HepG2 (cell line): ENCODE measurements at regions of chr7 and their contacts with region 1.

Region 1: DNA sequence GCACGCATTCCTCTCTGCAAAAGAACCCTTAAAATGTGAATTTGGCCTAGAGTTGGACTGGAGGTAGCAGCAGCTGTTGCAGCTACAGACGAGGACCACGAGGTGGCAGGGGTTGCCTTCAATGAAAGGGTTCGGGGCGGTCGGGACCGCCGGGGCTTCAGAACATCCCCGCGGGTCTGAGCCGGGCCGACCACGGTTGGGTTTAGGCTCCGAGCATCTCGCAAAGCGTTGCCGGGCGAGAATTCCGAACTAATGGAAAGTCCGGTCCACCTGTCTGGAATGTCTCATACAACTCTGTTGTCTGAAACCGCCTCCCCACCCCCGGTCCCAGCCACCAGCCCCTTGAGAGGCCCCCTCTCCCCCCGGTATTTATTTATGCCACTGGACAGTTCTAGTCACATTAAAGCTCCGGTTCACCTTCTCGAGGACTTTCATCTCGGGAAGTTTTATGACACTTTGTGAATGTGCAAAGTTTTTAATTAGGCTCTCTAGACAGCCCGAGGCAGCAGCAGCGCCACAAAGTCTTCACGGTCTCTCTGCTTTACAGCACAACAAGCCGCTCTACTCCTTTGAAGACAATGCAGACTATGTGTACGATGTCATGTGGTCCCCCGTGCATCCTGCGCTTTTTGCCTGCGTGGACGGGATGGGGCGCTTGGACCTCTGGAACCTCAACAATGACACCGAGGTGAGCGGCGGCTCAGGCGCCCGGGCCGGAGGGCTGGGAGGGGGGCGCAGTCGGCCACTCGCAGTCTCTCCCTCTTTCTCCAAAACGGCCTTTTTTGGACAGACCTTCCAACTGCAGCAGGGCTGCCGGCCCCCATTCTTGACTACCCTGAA is 246.2 kb downstream of the SLC25A13 start:
- DNase-seq: peak; percentile 55
- ATAC-seq: peak; percentile 99
- H3K4me3 ChIP-seq: peak overlapping the region; percentile 53 to 56 (median 56)
- H3K27ac ChIP-seq: no peak overlapping the region
- H3K4me1 ChIP-seq: peaks cover 7% of the 10 kb centered on the region
- H3K27me3 ChIP-seq: peaks cover 3 to 14% of the 10 kb centered on the region in 2 experiments; a peak in 3 of 5 replicates
- CTCF ChIP-seq: peak; percentile 91
- EP300 ChIP-seq: no peak
- POLR2A ChIP-seq: no peak
- RAD21 ChIP-seq: peak; percentile 90

Region 2: GRCh38 chr7:96093435-96093834 is 17.7 kb after region 1 on chr7:
- CTCF ChIA-PET with region 1: no interaction called
- POLR2A ChIA-PET with region 1: no interaction called
- in situ Hi-C with region 1: no loop called
- intact Hi-C with region 1: no loop called
- DNase-seq: no peak
- ATAC-seq: no peak
- H3K4me3 ChIP-seq: no peak overlapping the region
- H3K27ac ChIP-seq: no peak overlapping the region
- H3K4me1 ChIP-seq: no peaks in the 10 kb centered on the region
- H3K27me3 ChIP-seq: no peaks in the 10 kb centered on the region
- CTCF ChIP-seq: no peak
- EP300 ChIP-seq: no peak
- POLR2A ChIP-seq: no peak
- RAD21 ChIP-seq: no peak

Region 3: GRCh38 chr7:96143495-96144259 is 67.9 kb after region 1 on chr7:
- CTCF ChIA-PET with region 1: no interaction called
- POLR2A ChIA-PET with region 1: no interaction called
- in situ Hi-C with region 1: no loop called
- intact Hi-C with region 1: no loop called
- DNase-seq: no peak
- ATAC-seq: no peak
- H3K4me3 ChIP-seq: no peak overlapping the region
- H3K27ac ChIP-seq: no peak overlapping the region
- H3K4me1 ChIP-seq: no peaks in the 10 kb centered on the region
- H3K27me3 ChIP-seq: no peaks in the 10 kb centered on the region
- CTCF ChIP-seq: no peak
- EP300 ChIP-seq: no peak
- POLR2A ChIP-seq: no peak
- RAD21 ChIP-seq: no peak

Region 4: DNA sequence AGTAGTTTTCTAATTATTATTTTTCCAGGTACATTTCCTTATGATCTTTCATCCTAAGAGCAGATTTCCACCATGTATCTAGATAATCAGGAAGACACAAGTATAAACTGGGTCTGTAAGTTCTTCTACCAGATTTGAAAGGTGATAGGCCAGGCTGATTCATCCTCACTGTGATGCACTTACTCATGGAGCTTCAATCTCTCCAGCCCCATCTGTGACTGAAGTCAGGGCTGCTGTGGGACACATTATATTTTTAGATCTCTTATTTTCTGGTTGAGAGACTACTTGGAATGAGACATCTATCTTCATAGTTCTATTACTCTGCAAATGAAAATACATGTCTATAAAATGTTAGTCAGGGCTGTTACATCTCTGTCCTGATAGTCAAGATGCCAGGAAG is 331.7 kb after region 1 on chr7:
- CTCF ChIA-PET with region 1: no interaction called
- POLR2A ChIA-PET with region 1: no interaction called
- in situ Hi-C with region 1: no loop called
- intact Hi-C with region 1: no loop called
- DNase-seq: no peak
- ATAC-seq: no peak
- H3K4me3 ChIP-seq: no peak overlapping the region
- H3K27ac ChIP-seq: no peak overlapping the region
- H3K4me1 ChIP-seq: peaks cover 12% of the 10 kb centered on the region
- H3K27me3 ChIP-seq: no peaks in the 10 kb centered on the region
- CTCF ChIP-seq: no peak
- EP300 ChIP-seq: no peak
- POLR2A ChIP-seq: no peak
- RAD21 ChIP-seq: no peak

Region 5: GRCh38 chr7:96778263-96778662 is 702.5 kb after region 1 on chr7:
- CTCF ChIA-PET with region 1: no interaction called
- POLR2A ChIA-PET with region 1: no interaction called
- in situ Hi-C with region 1: no loop called
- intact Hi-C with region 1: loop called (anchors 10 kb)
- DNase-seq: peak; percentile 38
- ATAC-seq: peak; percentile 95
- H3K4me3 ChIP-seq: no peak overlapping the region
- H3K27ac ChIP-seq: no peak overlapping the region
- H3K4me1 ChIP-seq: no peaks in the 10 kb centered on the region
- H3K27me3 ChIP-seq: no peaks in the 10 kb centered on the region
- CTCF ChIP-seq: peak; percentile 66
- EP300 ChIP-seq: no peak
- POLR2A ChIP-seq: no peak
- RAD21 ChIP-seq: peak; percentile 45; the same call in 1 of the 2 replicates

Region 6: GRCh38 chr7:97064967-97065587 is 989.3 kb after region 1 on chr7:
- CTCF ChIA-PET with region 1: interaction called, 5 read pairs
- POLR2A ChIA-PET with region 1: no interaction called
- in situ Hi-C with region 1: loop called (anchors 10 kb)
- intact Hi-C with region 1: loop called (anchors 1 kb)
- DNase-seq: peak; percentile 36
- ATAC-seq: peak; percentile 92
- H3K4me3 ChIP-seq: no peak overlapping the region
- H3K27ac ChIP-seq: no peak overlapping the region
- H3K4me1 ChIP-seq: no peaks in the 10 kb centered on the region
- H3K27me3 ChIP-seq: no peaks in the 10 kb centered on the region
- CTCF ChIP-seq: peak; percentile 74
- EP300 ChIP-seq: no peak
- POLR2A ChIP-seq: no peak
- RAD21 ChIP-seq: peak; percentile 35; the same call in 1 of the 2 replicates